ENCODE measurements at regions of chr10 and their contacts with region 1.

Region 1: DNA sequence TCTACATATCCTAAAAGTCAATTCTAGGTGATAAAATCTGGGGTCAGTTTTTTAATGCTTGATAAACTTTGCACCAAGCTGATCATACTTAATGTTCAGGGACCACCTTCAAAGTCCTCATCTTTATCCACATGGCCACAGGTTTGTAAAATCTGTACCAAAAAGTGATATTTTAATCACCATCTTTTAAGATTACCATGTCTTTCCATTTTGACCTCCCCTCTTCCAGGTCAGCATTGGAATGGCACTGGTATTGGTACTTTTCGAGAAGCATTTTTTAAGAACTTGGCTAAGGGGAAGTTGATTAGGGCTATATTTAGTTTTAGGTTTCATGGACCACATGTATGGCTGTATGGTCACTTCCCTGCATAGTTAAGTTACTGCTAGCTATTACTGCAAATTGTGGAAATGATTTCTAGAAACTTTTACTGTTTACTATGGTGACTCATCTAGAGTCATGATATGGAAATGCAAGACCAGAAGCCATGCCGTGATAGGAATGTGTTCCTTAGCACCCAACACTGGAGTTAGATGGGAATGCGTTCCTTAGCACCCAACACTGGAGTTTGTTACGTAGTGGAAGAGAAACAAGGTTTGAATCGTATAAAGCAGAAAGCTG is 50.8 kb upstream of the ABLIM1 start:
- DNase-seq: peak; percentile 87
- H3K4me3 Mint-ChIP-seq: no peak overlapping the region
- H3K27ac Mint-ChIP-seq: peak overlapping the region; percentile 30
- H3K4me1 Mint-ChIP-seq: peaks cover 47% of the 10 kb centered on the region
- H3K27me3 Mint-ChIP-seq: no peaks in the 10 kb centered on the region
- CTCF ChIP-seq: no peak

Region 2: GRCh38 chr10:114593240-114593784 is 115.5 kb before region 1 on chr10:
- CTCF ChIA-PET with region 1: no interaction called
- POLR2A ChIA-PET with region 1: no interaction called
- intact Hi-C with region 1: no loop called
- DNase-seq: no peak
- H3K4me3 Mint-ChIP-seq: no peak overlapping the region
- H3K27ac Mint-ChIP-seq: no peak overlapping the region
- H3K4me1 Mint-ChIP-seq: no peaks in the 10 kb centered on the region
- H3K27me3 Mint-ChIP-seq: no peaks in the 10 kb centered on the region
- CTCF ChIP-seq: no peak

Region 3: GRCh38 chr10:114694752-114695151 is 14.1 kb before region 1 on chr10:
- CTCF ChIA-PET with region 1: interaction called, 6 read pairs
- POLR2A ChIA-PET with region 1: interaction called, 17 read pairs
- intact Hi-C with region 1: no loop called
- DNase-seq: peak; percentile 60
- H3K4me3 Mint-ChIP-seq: no peak overlapping the region
- H3K27ac Mint-ChIP-seq: no peak overlapping the region
- H3K4me1 Mint-ChIP-seq: peaks cover 42% of the 10 kb centered on the region
- H3K27me3 Mint-ChIP-seq: no peaks in the 10 kb centered on the region
- CTCF ChIP-seq: peak; percentile 38

Region 4: GRCh38 chr10:114821293-114821914 is 112.6 kb after region 1 on chr10 and contains the start of gene FHIP2A:
- CTCF ChIA-PET with region 1: interaction called, 5 read pairs
- POLR2A ChIA-PET with region 1: interaction called, 14 read pairs
- intact Hi-C with region 1: no loop called
- DNase-seq: peak; percentile 71
- H3K4me3 Mint-ChIP-seq: peak within 1 kb of the TSS; percentile 85
- H3K27ac Mint-ChIP-seq: peak within 1 kb of the TSS; percentile 97
- H3K4me1 Mint-ChIP-seq: peaks cover 20% of the 10 kb centered on the region
- H3K27me3 Mint-ChIP-seq: no peaks in the 10 kb centered on the region
- CTCF ChIP-seq: peak; percentile 34
- total RNA-seq, gene FHIP2A: 17.2 and 25.9 TPM in 2 replicates